Calu3 (cell line): ENCODE measurements at regions of chr5 and their contacts with region 1.

Region 1: GRCh38 chr5:100479079-100479688 is 56.0 kb upstream of the FAM174A start:
- DNase-seq: peak; percentile 46
- H3K4me3 Mint-ChIP-seq: no peak overlapping the region
- H3K27ac Mint-ChIP-seq: no peak overlapping the region
- H3K4me1 Mint-ChIP-seq: no peaks in the 10 kb centered on the region
- H3K27me3 Mint-ChIP-seq: no peaks in the 10 kb centered on the region
- CTCF ChIP-seq: peak; percentile 65

Region 2: GRCh38 chr5:100706776-100707175 is 227.6 kb after region 1 on chr5:
- CTCF ChIA-PET with region 1: no interaction called
- intact Hi-C with region 1: loop called (anchors 10 kb)
- DNase-seq: no peak
- H3K4me3 Mint-ChIP-seq: no peak overlapping the region
- H3K27ac Mint-ChIP-seq: no peak overlapping the region
- H3K4me1 Mint-ChIP-seq: no peaks in the 10 kb centered on the region
- H3K27me3 Mint-ChIP-seq: no peaks in the 10 kb centered on the region
- CTCF ChIP-seq: peak; percentile 43

Region 3: GRCh38 chr5:101045689-101046088 is 566.5 kb after region 1 on chr5:
- CTCF ChIA-PET with region 1: no interaction called
- intact Hi-C with region 1: loop called (anchors 1 kb)
- DNase-seq: no peak
- H3K4me3 Mint-ChIP-seq: no peak overlapping the region
- H3K27ac Mint-ChIP-seq: no peak overlapping the region
- H3K4me1 Mint-ChIP-seq: peaks cover 8% of the 10 kb centered on the region
- H3K27me3 Mint-ChIP-seq: no peaks in the 10 kb centered on the region
- CTCF ChIP-seq: peak; percentile 14

Region 4: GRCh38 chr5:101678481-101679193 is 1199.5 kb after region 1 on chr5:
- CTCF ChIA-PET with region 1: no interaction called
- intact Hi-C with region 1: loop called (anchors 2 kb)
- DNase-seq: peak; percentile 87
- H3K4me3 Mint-ChIP-seq: peak overlapping the region; percentile 55
- H3K27ac Mint-ChIP-seq: no peak overlapping the region
- H3K4me1 Mint-ChIP-seq: peaks cover 19% of the 10 kb centered on the region
- H3K27me3 Mint-ChIP-seq: no peaks in the 10 kb centered on the region
- CTCF ChIP-seq: peak; percentile 90